ENCODE measurements at regions of chr14 and their contacts with region 1.

Region 1: DNA sequence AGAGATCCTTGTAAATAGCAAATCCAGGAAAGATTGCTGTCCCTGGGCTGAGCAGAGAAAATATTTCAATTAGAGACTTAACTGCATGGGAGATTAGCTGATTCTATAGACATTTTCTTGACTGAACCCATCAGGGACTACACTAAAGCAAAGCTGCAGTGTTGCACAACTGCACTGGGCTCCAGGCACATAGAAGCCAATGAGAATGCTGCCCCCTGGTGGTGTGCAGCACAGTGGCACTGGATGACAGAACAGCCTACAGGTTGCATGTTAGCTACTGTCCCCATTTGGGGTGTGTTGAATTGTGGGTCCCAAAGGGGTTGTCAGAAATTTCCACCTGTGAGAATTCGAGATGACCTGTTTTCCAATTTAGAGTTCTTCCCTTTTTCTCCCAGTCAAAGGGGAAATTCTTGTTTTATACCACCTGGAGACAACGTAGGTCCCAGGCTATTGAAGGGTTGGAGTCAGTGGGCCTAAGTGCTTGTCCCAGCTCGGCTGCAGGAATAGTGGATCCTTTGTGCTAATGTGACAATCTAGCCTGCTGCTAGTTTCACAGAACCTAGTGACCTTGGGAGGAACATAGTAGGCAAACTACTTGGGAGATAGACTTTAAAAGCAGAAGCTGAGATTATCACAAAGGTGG is 114.7 kb downstream of the SLC8A3 start:
- DNase-seq: peak; percentile 21 to 87
- H3K4me3 ChIP-seq: no peak overlapping the region
- H3K27ac ChIP-seq: no peak overlapping the region
- H3K4me1 ChIP-seq: peaks cover 0 to 6% (median 0%) of the 10 kb centered on the region in 4 experiments; a peak in 3 of 7 replicates
- H3K27me3 ChIP-seq: no peaks in the 10 kb centered on the region
- CTCF ChIP-seq: peak; percentile 93 to 97 (median 97)
- EP300 ChIP-seq: no peak
- POLR2A ChIP-seq: no peak
- RAD21 ChIP-seq: peak; percentile 83 to 92

Region 2: DNA sequence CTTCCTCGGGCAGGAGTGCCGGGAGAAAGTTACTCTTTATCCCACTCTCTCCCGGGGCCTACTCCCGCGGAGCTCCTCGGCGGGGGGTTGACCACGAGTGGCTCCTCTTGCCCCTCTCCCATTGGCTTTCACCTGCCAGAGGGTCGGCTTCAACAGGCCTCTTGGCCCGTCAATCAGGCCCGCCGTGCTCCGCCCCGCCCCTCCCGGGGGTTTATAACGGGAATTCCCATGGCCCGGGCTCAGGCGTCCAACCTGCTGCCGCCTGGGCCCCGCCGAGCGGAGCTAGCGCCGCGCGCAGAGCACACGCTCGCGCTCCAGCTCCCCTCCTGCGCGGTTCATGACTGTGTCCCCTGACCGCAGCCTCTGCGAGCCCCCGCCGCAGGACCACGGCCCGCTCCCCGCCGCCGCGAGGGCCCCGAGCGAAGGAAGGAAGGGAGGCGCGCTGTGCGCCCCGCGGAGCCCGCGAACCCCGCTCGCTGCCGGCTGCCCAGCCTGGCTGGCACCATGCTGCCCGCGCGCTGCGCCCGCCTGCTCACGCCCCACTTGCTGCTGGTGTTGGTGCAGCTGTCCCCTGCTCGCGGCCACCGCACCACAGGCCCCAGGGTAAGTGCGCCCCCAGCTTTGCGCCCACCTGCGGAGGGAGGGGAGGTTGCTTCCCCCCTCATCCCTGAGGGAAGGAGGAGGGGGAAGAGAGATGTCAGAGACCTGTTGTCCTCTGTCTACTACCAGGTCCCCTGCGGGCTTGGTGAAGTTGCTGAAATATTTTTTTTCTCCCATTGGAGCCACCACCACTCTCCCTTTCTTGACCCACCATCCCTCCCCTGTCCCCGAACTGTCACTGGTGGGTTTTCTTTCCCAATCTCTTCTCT is 194.6 kb before region 1 on chr14 and contains the start of gene SMOC1:
- CTCF ChIA-PET with region 1: interaction called, 13 read pairs
- POLR2A ChIA-PET with region 1: no interaction called
- DNase-seq: peak; percentile 31 to 88
- H3K4me3 ChIP-seq: peak within 1 kb of the TSS; percentile 66 to 81 (median 74)
- H3K27ac ChIP-seq: no peak within 1 kb of the TSS
- H3K4me1 ChIP-seq: peaks cover 0 to 6% (median 4%) of the 10 kb centered on the region in 4 experiments; a peak in 3 of 7 replicates
- H3K27me3 ChIP-seq: peaks cover 3 to 26% (median 21%) of the 10 kb centered on the region in 4 experiments; a peak in 6 of 7 replicates
- CTCF ChIP-seq: no peak
- EP300 ChIP-seq: no peak
- POLR2A ChIP-seq: no peak
- RAD21 ChIP-seq: no peak; a peak in 1 of 4 replicates
- total RNA-seq, gene SMOC1: 1.6 and 2.4 TPM in 2 replicates

Region 3: GRCh38 chr14:70045844-70046535 is 28.1 kb before region 1 on chr14:
- CTCF ChIA-PET with region 1: interaction called, 80 read pairs
- POLR2A ChIA-PET with region 1: no interaction called
- DNase-seq: peak; percentile 63 to 86
- H3K4me3 ChIP-seq: no peak overlapping the region
- H3K27ac ChIP-seq: no peak overlapping the region
- H3K4me1 ChIP-seq: no peaks in the 10 kb centered on the region; a peak in 2 of 7 replicates
- H3K27me3 ChIP-seq: peaks cover 0 to 2% (median under 1%) of the 10 kb centered on the region in 4 experiments; a peak in 2 of 7 replicates
- CTCF ChIP-seq: peak; percentile 93 to 95 (median 93)
- EP300 ChIP-seq: no peak
- POLR2A ChIP-seq: no peak
- RAD21 ChIP-seq: peak; percentile 95 to 97

Region 4: GRCh38 chr14:70061108-70061507 is 12.9 kb before region 1 on chr14:
- CTCF ChIA-PET with region 1: interaction called, 35 read pairs
- POLR2A ChIA-PET with region 1: no interaction called
- DNase-seq: no peak
- H3K4me3 ChIP-seq: no peak overlapping the region
- H3K27ac ChIP-seq: no peak overlapping the region
- H3K4me1 ChIP-seq: peaks cover 0 to 2% (median 0%) of the 10 kb centered on the region in 4 experiments; a peak in 1 of 7 replicates
- H3K27me3 ChIP-seq: no peaks in the 10 kb centered on the region
- CTCF ChIP-seq: no peak
- EP300 ChIP-seq: no peak
- POLR2A ChIP-seq: no peak
- RAD21 ChIP-seq: no peak

Region 5: GRCh38 chr14:70096866-70097265 is 22.8 kb after region 1 on chr14:
- CTCF ChIA-PET with region 1: interaction called, 14 read pairs
- POLR2A ChIA-PET with region 1: no interaction called
- DNase-seq: no peak
- H3K4me3 ChIP-seq: no peak overlapping the region
- H3K27ac ChIP-seq: no peak overlapping the region
- H3K4me1 ChIP-seq: peaks cover 0 to 7% (median under 1%) of the 10 kb centered on the region in 4 experiments; a peak in 2 of 7 replicates
- H3K27me3 ChIP-seq: no peaks in the 10 kb centered on the region
- CTCF ChIP-seq: peak; percentile 64 to 86 (median 74)
- EP300 ChIP-seq: no peak
- POLR2A ChIP-seq: no peak
- RAD21 ChIP-seq: peak; percentile 73 to 86

Measured in H1 (cell line).